ENCODE measurements at regions of chr2 and their contacts with region 1.

Region 1: DNA sequence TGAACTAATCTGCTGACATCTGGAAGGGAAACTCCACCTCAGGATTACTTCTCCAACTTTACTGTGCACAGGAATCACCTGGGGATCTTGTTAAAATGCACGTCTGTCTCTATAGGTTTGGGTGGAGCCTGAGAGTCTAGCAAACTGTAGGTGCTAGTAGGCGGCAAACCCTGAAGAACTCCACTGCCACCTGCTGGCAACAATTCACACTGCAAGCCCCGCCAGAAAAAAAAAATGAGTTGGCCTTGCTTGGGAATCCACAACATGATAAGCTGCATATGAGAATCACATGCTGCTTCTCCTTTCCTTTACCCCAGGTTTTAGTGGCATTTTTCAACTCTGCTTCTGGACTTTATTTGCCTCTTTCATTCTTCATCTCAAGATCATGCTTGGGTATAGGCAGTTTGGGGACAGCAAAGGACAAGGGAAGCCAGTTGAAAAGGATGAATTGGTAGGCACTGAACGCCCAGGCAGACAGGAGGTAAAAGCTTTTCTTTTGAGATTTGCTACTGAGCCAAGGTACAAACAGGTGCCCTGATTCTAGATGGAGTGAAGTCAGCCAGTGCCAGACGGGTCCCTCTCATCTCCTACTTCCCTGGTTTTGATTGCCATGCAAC is 88.8 kb downstream of the VIT start:
- DNase-seq: peak; percentile 36 to 78 (median 60)
- ATAC-seq: peak; percentile 84
- H3K4me3 ChIP-seq: no peak overlapping the region
- H3K4me3 Mint-ChIP-seq: no peak overlapping the region
- H3K27ac ChIP-seq: no peak overlapping the region
- H3K27ac Mint-ChIP-seq: no peak overlapping the region
- H3K4me1 ChIP-seq: no peaks in the 10 kb centered on the region
- H3K4me1 Mint-ChIP-seq: peaks cover 4% of the 10 kb centered on the region
- H3K27me3 ChIP-seq: no peaks in the 10 kb centered on the region
- H3K27me3 Mint-ChIP-seq: peaks cover 7% of the 10 kb centered on the region
- CTCF ChIP-seq: peak; percentile 91

Region 2: DNA sequence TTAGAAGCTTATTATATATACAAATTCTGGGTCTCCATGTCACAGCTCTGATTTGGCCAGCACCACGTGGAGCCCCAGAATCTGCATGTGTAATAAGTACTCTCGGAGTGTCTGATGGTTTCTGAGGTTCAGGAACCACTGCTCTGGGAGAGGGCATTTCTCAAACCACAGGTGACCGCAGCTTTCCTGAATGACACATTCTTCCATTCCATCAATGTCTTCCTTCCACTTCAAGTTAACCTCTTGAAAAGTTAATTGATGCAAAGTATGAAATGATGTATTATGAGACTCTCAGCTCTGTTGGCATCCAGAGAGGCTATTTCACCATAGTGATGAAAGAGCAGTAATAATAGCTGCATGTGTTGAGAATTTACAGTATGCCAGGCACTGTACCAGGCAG is 491.0 kb before region 1 on chr2:
- CTCF ChIA-PET with region 1: no interaction called
- POLR2A ChIA-PET with region 1: no interaction called
- intact Hi-C with region 1: no loop called
- DNase-seq: no peak
- ATAC-seq: no peak
- H3K4me3 ChIP-seq: no peak overlapping the region
- H3K4me3 Mint-ChIP-seq: no peak overlapping the region
- H3K27ac ChIP-seq: no peak overlapping the region
- H3K27ac Mint-ChIP-seq: no peak overlapping the region
- H3K4me1 ChIP-seq: no peaks in the 10 kb centered on the region
- H3K4me1 Mint-ChIP-seq: no peaks in the 10 kb centered on the region
- H3K27me3 ChIP-seq: no peaks in the 10 kb centered on the region
- H3K27me3 Mint-ChIP-seq: no peaks in the 10 kb centered on the region
- CTCF ChIP-seq: no peak

Region 3: DNA sequence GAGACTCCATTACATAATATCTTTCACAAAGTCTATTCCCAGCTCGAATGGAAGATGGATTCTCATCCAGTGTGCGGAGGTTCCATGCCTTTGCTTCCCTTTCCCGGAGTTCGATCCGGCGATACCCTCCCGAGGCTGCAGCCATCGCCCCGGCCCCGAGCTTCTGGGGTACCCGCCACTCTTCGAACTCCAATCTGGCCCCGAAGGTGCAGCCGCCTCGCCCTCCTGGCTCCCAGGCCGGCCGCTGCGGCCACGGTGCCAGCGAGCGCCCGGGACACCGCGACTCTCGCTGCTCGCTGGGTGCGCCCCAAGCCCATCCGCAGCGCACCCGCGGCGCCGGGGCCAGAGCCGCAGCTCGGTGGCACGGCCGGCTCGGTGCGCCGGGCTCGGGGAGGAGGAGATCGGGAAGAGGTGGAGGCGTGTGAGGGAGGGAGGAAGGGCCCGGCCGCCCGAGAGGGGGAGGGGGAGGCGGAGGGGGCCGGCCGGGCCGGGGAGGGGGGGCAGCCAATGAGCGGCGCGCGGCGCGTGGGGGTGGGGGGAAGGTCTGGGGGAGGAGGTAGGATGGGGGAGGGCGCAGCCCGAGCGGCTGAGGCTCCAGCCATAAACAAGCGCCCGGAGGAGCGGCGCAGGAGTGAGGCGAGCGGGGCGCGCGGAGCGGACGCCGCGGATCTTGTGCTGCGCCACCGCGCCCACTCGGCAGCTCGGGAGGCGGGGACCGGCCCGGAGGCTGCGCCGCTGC is 430.0 kb before region 1 on chr2 and contains the start of gene CRIM1:
- CTCF ChIA-PET with region 1: interaction called, 7 read pairs
- POLR2A ChIA-PET with region 1: no interaction called
- intact Hi-C with region 1: loop called (anchors 1 to 5 kb)
- DNase-seq: peak in 7 of 9 experiments; percentile 17 to 73 (median 44)
- ATAC-seq: peak; percentile 48
- H3K4me3 ChIP-seq: peak within 1 kb of the TSS; percentile 52 to 62
- H3K4me3 Mint-ChIP-seq: peak within 1 kb of the TSS; percentile 89
- H3K27ac ChIP-seq: no peak within 1 kb of the TSS
- H3K27ac Mint-ChIP-seq: no peak within 1 kb of the TSS
- H3K4me1 ChIP-seq: peaks cover 23% of the 10 kb centered on the region
- H3K4me1 Mint-ChIP-seq: peaks cover 29% of the 10 kb centered on the region
- H3K27me3 ChIP-seq: peaks cover 0 to 10% of the 10 kb centered on the region in 2 experiments
- H3K27me3 Mint-ChIP-seq: peaks cover 38% of the 10 kb centered on the region
- CTCF ChIP-seq: no peak
- total RNA-seq, gene CRIM1: 4.3 to 5.3 TPM

Region 4: GRCh38 chr2:36918307-36918706 is 133.0 kb after region 1 on chr2:
- CTCF ChIA-PET with region 1: no interaction called
- POLR2A ChIA-PET with region 1: no interaction called
- intact Hi-C with region 1: loop called in 1 of 2 experiments (anchors 2 kb)
- DNase-seq: no peak
- ATAC-seq: no peak
- H3K4me3 ChIP-seq: no peak overlapping the region
- H3K4me3 Mint-ChIP-seq: no peak overlapping the region
- H3K27ac ChIP-seq: no peak overlapping the region
- H3K27ac Mint-ChIP-seq: no peak overlapping the region
- H3K4me1 ChIP-seq: no peaks in the 10 kb centered on the region
- H3K4me1 Mint-ChIP-seq: peaks cover 19% of the 10 kb centered on the region
- H3K27me3 ChIP-seq: no peaks in the 10 kb centered on the region
- H3K27me3 Mint-ChIP-seq: no peaks in the 10 kb centered on the region
- CTCF ChIP-seq: peak; percentile 37

Region 5: GRCh38 chr2:37877457-37878315 is 1092.4 kb after region 1 on chr2:
- CTCF ChIA-PET with region 1: interaction called, 4 read pairs
- POLR2A ChIA-PET with region 1: no interaction called
- intact Hi-C with region 1: loop called in 1 of 2 experiments (anchors 2 kb)
- DNase-seq: peak in 3 of 9 experiments; percentile 39 to 76 (median 67)
- ATAC-seq: peak; percentile 63
- H3K4me3 ChIP-seq: no peak overlapping the region
- H3K4me3 Mint-ChIP-seq: no peak overlapping the region
- H3K27ac ChIP-seq: no peak overlapping the region
- H3K27ac Mint-ChIP-seq: no peak overlapping the region
- H3K4me1 ChIP-seq: no peaks in the 10 kb centered on the region
- H3K4me1 Mint-ChIP-seq: peaks cover 2% of the 10 kb centered on the region
- H3K27me3 ChIP-seq: no peaks in the 10 kb centered on the region
- H3K27me3 Mint-ChIP-seq: peaks cover 21% of the 10 kb centered on the region
- CTCF ChIP-seq: peak; percentile 82

Measured in CD8-positive, alpha-beta T cell (primary cell).